ENCODE measurements at regions of chr9 and their contacts with region 1.

Region 1: DNA sequence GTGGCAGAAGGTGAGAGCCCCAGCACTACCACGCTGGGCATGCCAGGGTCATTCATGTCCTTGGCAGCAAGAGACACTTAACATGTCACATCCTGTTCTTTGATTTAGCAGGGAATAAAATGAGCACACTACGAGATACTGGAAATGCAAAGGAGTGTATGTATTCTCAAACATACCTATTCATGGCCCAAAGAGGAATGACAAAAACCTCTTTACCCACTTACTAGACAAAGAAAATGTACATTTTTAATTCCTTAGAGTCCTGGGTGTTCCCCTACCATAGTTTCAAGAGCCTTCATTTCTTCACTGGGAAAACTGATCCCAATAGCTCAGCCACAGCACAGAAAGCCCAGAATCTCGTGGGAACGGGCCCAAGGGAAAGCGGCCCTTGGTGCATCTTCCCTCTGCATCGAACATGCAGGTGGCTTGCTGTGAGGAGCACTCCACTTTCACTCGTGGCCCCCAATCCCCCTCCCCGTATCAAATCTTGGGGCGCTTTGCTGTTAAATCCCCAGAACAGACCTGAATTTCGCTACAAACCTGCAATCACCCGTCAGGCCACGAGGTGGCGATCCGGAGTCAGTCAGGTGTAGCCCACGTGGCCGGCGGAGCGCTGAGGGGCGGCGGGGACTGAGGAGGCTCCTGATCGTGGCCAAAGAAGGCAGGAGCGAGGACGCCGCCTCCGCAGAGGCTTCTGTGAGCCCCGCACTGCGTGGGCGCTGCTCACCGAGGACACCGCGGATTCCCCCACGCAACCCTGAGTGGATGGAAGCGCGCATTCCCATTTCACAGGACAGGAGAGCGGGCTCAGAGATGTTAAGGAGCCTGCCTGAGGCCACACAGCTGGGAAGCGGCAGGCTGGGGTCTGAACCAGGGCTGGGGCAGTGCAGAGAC is 91.4 kb downstream of the LMX1B start:
- DNase-seq: peak; percentile 77 to 82 (median 81)
- H3K4me3 ChIP-seq: no peak overlapping the region
- H3K4me3 Mint-ChIP-seq: peak overlapping the region; percentile 17 to 79 (median 53)
- H3K27ac ChIP-seq: no peak overlapping the region
- H3K27ac Mint-ChIP-seq: peak overlapping the region in 4 of 7 donors; percentile 9 to 53 (median 30)
- H3K4me1 ChIP-seq: peaks cover 17% of the 10 kb centered on the region
- H3K4me1 Mint-ChIP-seq: peaks cover 7 to 21% (median 14%) of the 10 kb centered on the region in 4 donors
- H3K27me3 ChIP-seq: peaks cover 10% of the 10 kb centered on the region
- H3K27me3 Mint-ChIP-seq: peaks cover 14 to 18% of the 10 kb centered on the region in 2 donors

Region 2: DNA sequence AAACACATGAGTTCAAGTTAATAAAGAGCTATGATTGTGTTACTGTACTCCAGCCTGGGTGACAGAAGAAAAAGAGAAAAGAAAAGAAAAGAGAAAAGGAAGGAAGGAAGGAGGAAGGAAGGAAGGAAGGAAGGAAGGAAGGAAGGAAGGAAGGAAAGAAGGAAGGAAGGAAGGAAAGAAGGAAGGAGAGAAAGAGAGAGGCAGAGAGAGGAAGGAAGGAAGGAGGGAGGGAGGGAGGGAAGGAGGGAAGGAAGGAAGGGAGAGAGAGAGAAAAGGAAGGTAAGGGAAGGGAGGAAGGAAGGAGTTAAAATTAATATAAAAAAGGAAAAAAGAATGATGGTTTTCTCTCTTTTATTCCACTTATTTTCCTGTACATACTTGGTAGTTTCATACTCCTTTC is 10.3 kb after region 1 on chr9:
- CTCF ChIA-PET with region 1: interaction called, 61 read pairs
- POLR2A ChIA-PET with region 1: interaction called, 10 read pairs
- intact Hi-C with region 1: loop called (anchors 1 kb)
- DNase-seq: no peak
- H3K4me3 ChIP-seq: no peak overlapping the region
- H3K4me3 Mint-ChIP-seq: no peak overlapping the region
- H3K27ac ChIP-seq: no peak overlapping the region
- H3K27ac Mint-ChIP-seq: peak overlapping the region in 1 of 7 donors; percentile 63
- H3K4me1 ChIP-seq: peaks cover 15% of the 10 kb centered on the region
- H3K4me1 Mint-ChIP-seq: peaks cover 13 to 26% (median 14%) of the 10 kb centered on the region in 4 donors
- H3K27me3 ChIP-seq: no peaks in the 10 kb centered on the region
- H3K27me3 Mint-ChIP-seq: no peaks in the 10 kb centered on the region

Region 3: GRCh38 chr9:126733005-126733404 is 27.9 kb after region 1 on chr9:
- CTCF ChIA-PET with region 1: interaction called, 35 read pairs
- POLR2A ChIA-PET with region 1: no interaction called
- intact Hi-C with region 1: no loop called
- DNase-seq: no peak
- H3K4me3 ChIP-seq: no peak overlapping the region
- H3K4me3 Mint-ChIP-seq: no peak overlapping the region
- H3K27ac ChIP-seq: no peak overlapping the region
- H3K27ac Mint-ChIP-seq: no peak overlapping the region
- H3K4me1 ChIP-seq: no peaks in the 10 kb centered on the region
- H3K4me1 Mint-ChIP-seq: no peaks in the 10 kb centered on the region
- H3K27me3 ChIP-seq: no peaks in the 10 kb centered on the region
- H3K27me3 Mint-ChIP-seq: peaks cover 0 to 3% of the 10 kb centered on the region in 2 donors

Region 4: DNA sequence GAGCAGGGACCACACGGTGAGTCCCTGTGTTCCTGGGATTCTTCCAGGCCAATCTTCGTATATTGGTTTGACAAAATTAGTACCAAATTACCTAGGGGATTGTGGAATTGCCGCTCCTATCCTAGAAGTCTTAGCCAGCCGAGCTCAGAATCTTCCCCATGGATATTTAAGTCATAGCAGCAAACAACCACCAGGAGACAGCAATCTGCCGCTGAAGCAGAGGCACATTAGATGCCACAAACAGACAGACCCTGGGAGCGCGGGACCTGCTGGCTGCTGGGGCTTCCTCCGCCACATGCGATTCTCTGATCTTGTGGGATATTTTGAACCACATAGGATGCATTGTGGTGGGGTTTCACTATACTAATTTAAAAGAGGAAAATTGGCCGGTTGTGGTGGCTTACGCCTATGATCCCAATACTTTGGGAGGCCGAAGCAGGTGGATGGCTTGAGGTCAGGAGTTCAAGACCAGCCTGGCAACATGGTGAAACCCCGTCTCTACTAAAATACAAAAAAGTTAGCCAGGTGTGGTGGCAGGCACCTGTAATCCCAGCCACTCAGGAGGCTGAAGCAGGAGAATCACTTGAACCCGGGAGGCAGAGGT is 68.0 kb after region 1 on chr9:
- CTCF ChIA-PET with region 1: interaction called, 587 read pairs
- POLR2A ChIA-PET with region 1: interaction called, 4 read pairs
- intact Hi-C with region 1: no loop called
- DNase-seq: no peak
- H3K4me3 ChIP-seq: no peak overlapping the region
- H3K4me3 Mint-ChIP-seq: no peak overlapping the region
- H3K27ac ChIP-seq: no peak overlapping the region
- H3K27ac Mint-ChIP-seq: no peak overlapping the region
- H3K4me1 ChIP-seq: no peaks in the 10 kb centered on the region
- H3K4me1 Mint-ChIP-seq: peaks cover 0 to under 1% (median 0%) of the 10 kb centered on the region in 4 donors
- H3K27me3 ChIP-seq: no peaks in the 10 kb centered on the region
- H3K27me3 Mint-ChIP-seq: peaks cover 3 to 6% of the 10 kb centered on the region in 2 donors

Region 5: DNA sequence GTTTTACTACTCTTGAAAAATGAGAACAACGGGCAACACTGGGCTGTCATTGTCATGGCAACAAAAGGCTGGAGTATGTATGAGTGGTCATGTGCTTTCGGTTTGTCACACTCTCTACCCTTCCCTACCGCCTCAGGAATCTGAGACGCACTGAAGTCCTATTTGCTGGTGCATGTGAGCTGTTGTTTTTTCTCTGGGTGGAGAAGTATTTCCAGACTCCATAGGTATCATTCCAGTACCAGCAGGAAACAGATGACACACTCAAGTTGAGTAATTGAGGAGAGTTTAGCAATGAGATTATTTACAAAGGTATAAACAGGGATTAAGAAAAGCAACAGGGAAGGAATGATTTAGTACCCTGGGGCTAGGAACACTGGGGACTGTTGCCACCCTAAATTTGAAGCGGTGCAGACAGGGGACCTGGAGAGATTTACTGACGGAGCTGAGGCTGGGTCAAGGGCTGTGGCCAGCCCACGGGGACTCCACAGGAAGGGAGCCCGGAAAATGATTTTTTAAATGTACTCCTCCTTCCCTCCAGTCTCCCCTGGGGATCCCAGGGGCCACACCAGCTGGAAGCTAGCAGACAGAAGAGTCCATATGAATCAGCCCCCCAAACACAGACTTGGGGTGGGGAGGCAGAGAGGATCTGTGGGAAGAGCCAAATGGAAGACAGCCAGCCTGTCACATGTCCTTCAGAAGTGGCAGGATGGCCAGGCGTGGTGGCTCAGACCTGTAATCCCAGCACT is 86.5 kb after region 1 on chr9:
- CTCF ChIA-PET with region 1: interaction called, 587 read pairs
- POLR2A ChIA-PET with region 1: no interaction called
- intact Hi-C with region 1: no loop called
- DNase-seq: no peak
- H3K4me3 ChIP-seq: no peak overlapping the region
- H3K4me3 Mint-ChIP-seq: no peak overlapping the region
- H3K27ac ChIP-seq: no peak overlapping the region
- H3K27ac Mint-ChIP-seq: no peak overlapping the region
- H3K4me1 ChIP-seq: no peaks in the 10 kb centered on the region
- H3K4me1 Mint-ChIP-seq: no peaks in the 10 kb centered on the region
- H3K27me3 ChIP-seq: no peaks in the 10 kb centered on the region
- H3K27me3 Mint-ChIP-seq: peaks cover 26 to 34% of the 10 kb centered on the region in 2 donors

Measured in CD4-positive, alpha-beta memory T cell (primary cell).